HCT116 (cell line): ENCODE measurements at regions of chr6 and their contacts with region 1.

Region 1: GRCh38 chr6:82270881-82271645 is 23.5 kb upstream of the IBTK start:
- DNase-seq: peak; percentile 24
- ATAC-seq: peak; percentile 64
- H3K4me3 ChIP-seq: no peak overlapping the region
- H3K27ac ChIP-seq: no peak overlapping the region
- H3K4me1 ChIP-seq: peaks cover 4 to 15% of the 10 kb centered on the region in 2 experiments; a peak in 3 of 4 replicates
- H3K27me3 ChIP-seq: no peaks in the 10 kb centered on the region
- CTCF ChIP-seq: peak; percentile 43 to 76 (median 75); a peak in 5 of 6 replicates
- POLR2A ChIP-seq: no peak
- RAD21 ChIP-seq: peak; percentile 81

Region 2: GRCh38 chr6:82257088-82257772 is 13.8 kb before region 1 on chr6:
- CTCF ChIA-PET with region 1: interaction called, 20 read pairs
- POLR2A ChIA-PET with region 1: no interaction called
- RAD21 ChIA-PET with region 1: interaction called in 1 of 2 experiments, 3 read pairs
- intact Hi-C with region 1: no loop called
- DNase-seq: no peak
- ATAC-seq: no peak
- H3K4me3 ChIP-seq: no peak overlapping the region
- H3K27ac ChIP-seq: no peak overlapping the region
- H3K4me1 ChIP-seq: peaks cover 24 to 26% of the 10 kb centered on the region in 2 experiments
- H3K27me3 ChIP-seq: no peaks in the 10 kb centered on the region
- CTCF ChIP-seq: peak in 2 of 3 experiments; percentile 16 to 24; a peak in 1 of 6 replicates
- POLR2A ChIP-seq: no peak
- RAD21 ChIP-seq: peak; percentile 50

Region 3: GRCh38 chr6:82568290-82569014 is 297.4 kb after region 1 on chr6:
- CTCF ChIA-PET with region 1: no interaction called
- POLR2A ChIA-PET with region 1: no interaction called
- RAD21 ChIA-PET with region 1: no interaction called
- intact Hi-C with region 1: no loop called
- DNase-seq: no peak
- ATAC-seq: no peak
- H3K4me3 ChIP-seq: no peak overlapping the region
- H3K27ac ChIP-seq: no peak overlapping the region
- H3K4me1 ChIP-seq: no peaks in the 10 kb centered on the region
- H3K27me3 ChIP-seq: no peaks in the 10 kb centered on the region
- CTCF ChIP-seq: no peak
- POLR2A ChIP-seq: no peak
- RAD21 ChIP-seq: no peak

Region 4: DNA sequence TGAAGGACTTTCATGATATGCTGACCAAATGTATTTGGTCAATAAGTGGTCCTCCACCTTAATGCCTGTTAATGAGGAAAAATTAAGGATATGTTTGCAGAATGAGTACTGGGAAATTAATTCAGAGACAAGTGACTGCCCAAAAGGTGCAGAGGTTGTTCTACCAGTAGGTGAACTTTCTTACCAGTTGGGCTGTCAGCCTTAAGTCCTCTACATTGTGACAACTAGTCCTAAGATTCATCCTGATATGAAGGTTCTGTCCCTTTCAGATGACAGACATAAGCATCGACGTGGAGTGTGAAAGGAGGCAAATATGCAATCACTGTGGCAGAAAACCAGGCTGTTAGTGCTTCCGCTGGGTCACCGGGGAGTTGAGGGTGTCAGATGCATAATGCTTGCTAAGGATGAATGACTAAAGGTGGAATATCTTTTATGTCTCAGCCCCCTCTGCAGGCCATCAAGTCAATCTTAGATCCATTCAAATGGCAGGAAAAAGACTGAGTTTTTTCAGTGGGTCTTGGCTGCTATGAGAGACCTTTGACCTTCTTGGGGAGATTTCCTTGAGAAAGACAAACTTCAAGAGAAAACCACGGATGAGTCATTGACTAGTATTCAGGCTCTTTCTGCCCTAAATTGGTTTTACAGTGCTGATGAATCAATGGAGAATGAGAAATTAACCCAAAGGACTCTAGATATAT is 318.6 kb after region 1 on chr6:
- CTCF ChIA-PET with region 1: no interaction called
- POLR2A ChIA-PET with region 1: no interaction called
- RAD21 ChIA-PET with region 1: no interaction called
- intact Hi-C with region 1: loop called (anchors 1 kb)
- DNase-seq: peak; percentile 70
- ATAC-seq: peak; percentile 94
- H3K4me3 ChIP-seq: no peak overlapping the region
- H3K27ac ChIP-seq: no peak overlapping the region
- H3K4me1 ChIP-seq: peaks cover 5 to 14% of the 10 kb centered on the region in 2 experiments; a peak in 3 of 4 replicates
- H3K27me3 ChIP-seq: no peaks in the 10 kb centered on the region
- CTCF ChIP-seq: peak; percentile 23 to 53 (median 42); a peak in 4 of 6 replicates
- POLR2A ChIP-seq: no peak
- RAD21 ChIP-seq: peak; percentile 79